ENCODE measurements at regions of chr11 and their contacts with region 1.

Region 1: GRCh38 chr11:14519917-14520746 is at the start of gene PSMA1:
- DNase-seq: peak; percentile 91
- ATAC-seq: peak; percentile 90
- H3K4me3 Mint-ChIP-seq: peak within 1 kb of the TSS; percentile 84
- H3K27ac Mint-ChIP-seq: peak within 1 kb of the TSS; percentile 90
- H3K4me1 Mint-ChIP-seq: peaks cover 16% of the 10 kb centered on the region
- H3K27me3 Mint-ChIP-seq: no peaks in the 10 kb centered on the region
- total RNA-seq, gene PSMA1: 181 to 189 TPM

Region 2: DNA sequence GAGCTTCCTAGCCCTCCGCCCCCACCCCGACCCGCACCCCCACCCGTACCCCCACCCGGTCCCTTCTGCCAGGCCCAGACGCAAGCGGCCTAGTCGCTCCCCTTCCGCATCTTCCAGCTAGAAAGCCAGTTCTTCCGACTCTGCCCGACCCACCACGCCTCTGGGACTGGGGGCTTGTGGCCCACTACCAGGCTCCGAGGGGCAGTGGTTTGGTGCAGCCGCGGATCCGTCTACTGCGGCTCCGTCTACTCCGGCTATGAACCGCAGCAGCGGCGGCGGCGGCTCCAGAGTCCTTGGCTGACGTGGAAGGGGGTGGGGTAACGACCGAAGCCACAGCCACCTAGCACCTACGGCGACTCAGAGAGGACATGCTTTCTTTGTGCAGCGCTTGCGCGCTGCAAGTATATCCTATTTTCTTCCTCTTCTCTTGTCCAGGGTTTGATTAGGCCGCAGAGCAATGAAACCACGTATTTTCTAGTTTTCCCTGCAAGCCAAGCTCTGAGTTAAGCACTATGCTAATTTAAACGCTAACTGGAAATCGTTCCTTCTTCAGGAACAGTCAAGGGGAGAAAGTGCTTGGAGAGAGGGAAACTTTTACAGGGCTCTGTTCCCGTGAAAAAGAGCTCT is 20.5 kb before region 1 on chr11 and contains the start of gene COPB1:
- POLR2A ChIA-PET with region 1: interaction called, 29 read pairs
- DNase-seq: peak; percentile 93
- ATAC-seq: peak; percentile 87
- H3K4me3 Mint-ChIP-seq: peak within 1 kb of the TSS; percentile 96
- H3K27ac Mint-ChIP-seq: peak within 1 kb of the TSS; percentile 97
- H3K4me1 Mint-ChIP-seq: peaks cover 24% of the 10 kb centered on the region
- H3K27me3 Mint-ChIP-seq: no peaks in the 10 kb centered on the region
- total RNA-seq, gene COPB1: 80.1 to 91.2 TPM

Region 3: DNA sequence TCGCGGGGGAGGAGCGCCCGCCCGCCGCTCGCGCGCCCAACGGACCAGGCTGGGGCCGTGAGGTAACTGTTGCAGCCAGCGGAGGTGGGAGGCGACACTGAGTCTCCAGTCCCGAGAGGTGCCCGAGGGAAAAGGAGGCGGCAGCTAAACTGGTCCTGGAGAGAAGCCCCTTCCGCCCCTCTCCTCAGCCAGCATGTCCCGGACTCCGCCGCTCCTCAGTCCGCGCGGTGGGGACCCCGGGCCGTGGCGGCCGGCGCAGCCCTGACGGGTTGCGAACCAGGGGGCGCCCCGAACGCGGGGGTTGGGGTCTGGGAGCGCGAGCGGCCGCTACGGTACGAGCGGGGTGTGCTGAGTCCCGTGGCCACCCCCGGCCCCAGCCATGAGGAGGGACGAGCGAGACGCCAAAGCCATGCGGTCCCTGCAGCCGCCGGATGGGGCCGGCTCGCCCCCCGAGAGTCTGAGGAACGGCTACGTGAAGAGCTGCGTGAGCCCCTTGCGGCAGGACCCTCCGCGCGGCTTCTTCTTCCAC is 123.6 kb after region 1 on chr11 and contains the start of gene PDE3B:
- POLR2A ChIA-PET with region 1: interaction called, 19 read pairs
- DNase-seq: peak; percentile 84
- ATAC-seq: peak; percentile 76
- H3K4me3 Mint-ChIP-seq: peak within 1 kb of the TSS; percentile 92
- H3K27ac Mint-ChIP-seq: peak within 1 kb of the TSS; percentile 90
- H3K4me1 Mint-ChIP-seq: peaks cover 42% of the 10 kb centered on the region
- H3K27me3 Mint-ChIP-seq: no peaks in the 10 kb centered on the region
- total RNA-seq, gene PDE3B: 117 to 125 TPM

Region 4: GRCh38 chr11:14907411-14908213 is 387.5 kb after region 1 on chr11:
- POLR2A ChIA-PET with region 1: interaction called, 14 read pairs
- DNase-seq: peak; percentile 91
- ATAC-seq: peak; percentile 58
- H3K4me3 Mint-ChIP-seq: peak overlapping the region; percentile 2
- H3K27ac Mint-ChIP-seq: peak overlapping the region; percentile 52
- H3K4me1 Mint-ChIP-seq: peaks cover 38% of the 10 kb centered on the region
- H3K27me3 Mint-ChIP-seq: no peaks in the 10 kb centered on the region

Measured in activated naive CD8-positive, alpha-beta T cell treated with anti-CD3 and anti-CD28 coated beads, Interleukin-2, amount 10 ng/mL, durations not matched to agents 7 days and 5 days (primary cell).